B cell (primary cell): ENCODE measurements at regions of chr6 and their contacts with region 1.

Region 1: GRCh38 chr6:37207903-37208456 is 38.0 kb downstream of the PIM1 start:
- DNase-seq: peak; percentile 88
- ATAC-seq: peak; percentile 95
- H3K4me3 ChIP-seq: no peak overlapping the region
- H3K4me3 Mint-ChIP-seq: no peak overlapping the region
- H3K27ac ChIP-seq: no peak overlapping the region
- H3K27ac Mint-ChIP-seq: peak overlapping the region; percentile 3
- H3K4me1 ChIP-seq: peaks cover 4 to 12% of the 10 kb centered on the region in 2 donors
- H3K4me1 Mint-ChIP-seq: peaks cover 14% of the 10 kb centered on the region
- H3K27me3 ChIP-seq: peaks cover 0 to 4% (median 0%) of the 10 kb centered on the region in 4 experiments
- H3K27me3 Mint-ChIP-seq: no peaks in the 10 kb centered on the region
- CTCF ChIP-seq: peak; percentile 85

Region 2: DNA sequence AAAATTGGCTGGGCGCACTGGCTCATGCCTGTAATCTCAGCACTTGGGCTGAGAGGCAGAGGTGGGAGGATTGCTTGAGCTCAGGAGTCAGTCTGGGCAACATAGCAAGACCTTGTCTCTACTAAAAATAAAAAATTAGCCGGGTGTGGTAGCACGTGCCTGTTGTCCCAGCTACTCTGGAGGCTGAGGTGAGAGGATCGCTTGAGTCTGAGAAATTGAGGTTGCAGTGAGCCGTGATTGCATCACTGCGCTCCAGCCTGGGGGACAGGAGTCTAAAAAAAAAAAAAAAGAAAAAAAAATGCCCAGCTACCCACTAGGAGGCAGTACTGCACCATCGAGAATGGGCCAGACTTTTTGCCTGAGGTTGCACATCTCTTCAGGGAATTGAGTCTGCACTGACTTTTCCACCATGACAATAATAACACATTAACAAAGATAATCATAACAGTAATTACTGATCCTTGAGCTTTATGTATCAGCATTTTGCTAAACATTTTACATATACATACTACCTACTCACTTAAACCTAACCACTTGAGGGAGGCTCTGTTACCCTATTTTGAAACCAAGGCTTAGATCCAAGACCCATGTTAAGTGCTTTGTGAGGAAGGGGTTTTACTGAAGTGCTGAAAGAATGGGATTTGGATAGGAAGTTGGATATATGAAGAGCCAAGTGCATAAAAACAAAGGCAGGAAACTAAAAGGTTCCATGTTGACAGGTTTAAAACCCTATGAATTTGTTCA is 592.8 kb before region 1 on chr6:
- CTCF ChIA-PET with region 1: interaction called, 3 read pairs
- POLR2A ChIA-PET with region 1: no interaction called
- intact Hi-C with region 1: loop called (anchors 10 kb)
- DNase-seq: peak; percentile 82
- ATAC-seq: peak; percentile 81
- H3K4me3 ChIP-seq: no peak overlapping the region
- H3K4me3 Mint-ChIP-seq: no peak overlapping the region
- H3K27ac ChIP-seq: no peak overlapping the region
- H3K27ac Mint-ChIP-seq: peak overlapping the region; percentile 69
- H3K4me1 ChIP-seq: peaks cover 9 to 21% of the 10 kb centered on the region in 2 donors
- H3K4me1 Mint-ChIP-seq: peaks cover 19% of the 10 kb centered on the region
- H3K27me3 ChIP-seq: no peaks in the 10 kb centered on the region
- H3K27me3 Mint-ChIP-seq: no peaks in the 10 kb centered on the region
- CTCF ChIP-seq: peak; percentile 84

Region 3: GRCh38 chr6:36776167-36776566 is 431.8 kb before region 1 on chr6:
- CTCF ChIA-PET with region 1: no interaction called
- POLR2A ChIA-PET with region 1: no interaction called
- intact Hi-C with region 1: no loop called
- DNase-seq: no peak
- ATAC-seq: no peak
- H3K4me3 ChIP-seq: no peak overlapping the region
- H3K4me3 Mint-ChIP-seq: no peak overlapping the region
- H3K27ac ChIP-seq: no peak overlapping the region
- H3K27ac Mint-ChIP-seq: no peak overlapping the region
- H3K4me1 ChIP-seq: peaks cover 11 to 12% of the 10 kb centered on the region in 2 donors
- H3K4me1 Mint-ChIP-seq: peaks cover 13% of the 10 kb centered on the region
- H3K27me3 ChIP-seq: peaks cover 0 to 9% (median 0%) of the 10 kb centered on the region in 4 experiments
- H3K27me3 Mint-ChIP-seq: peaks cover 31% of the 10 kb centered on the region
- CTCF ChIP-seq: no peak

Region 4: GRCh38 chr6:36874443-36875249 is 333.3 kb before region 1 on chr6 and contains the start of gene PPIL1:
- CTCF ChIA-PET with region 1: interaction called, 12 read pairs
- POLR2A ChIA-PET with region 1: no interaction called
- intact Hi-C with region 1: no loop called
- DNase-seq: peak; percentile 96
- ATAC-seq: peak; percentile 93
- H3K4me3 ChIP-seq: peak within 1 kb of the TSS; percentile 73 to 100 (median 99)
- H3K4me3 Mint-ChIP-seq: peak within 1 kb of the TSS; percentile 99
- H3K27ac ChIP-seq: peak within 1 kb of the TSS; percentile 63 to 89
- H3K27ac Mint-ChIP-seq: peak within 1 kb of the TSS; percentile 97
- H3K4me1 ChIP-seq: peaks cover 12 to 15% of the 10 kb centered on the region in 2 donors
- H3K4me1 Mint-ChIP-seq: peaks cover 32% of the 10 kb centered on the region
- H3K27me3 ChIP-seq: peaks cover 0 to 3% (median under 1%) of the 10 kb centered on the region in 4 experiments
- H3K27me3 Mint-ChIP-seq: no peaks in the 10 kb centered on the region
- CTCF ChIP-seq: no peak
- total RNA-seq, gene PPIL1: 7.0 and 10.5 TPM in 2 replicates

Region 5: GRCh38 chr6:36979347-36979742 is 228.6 kb before region 1 on chr6:
- CTCF ChIA-PET with region 1: interaction called, 16 read pairs
- POLR2A ChIA-PET with region 1: no interaction called
- intact Hi-C with region 1: loop called (anchors 1 kb)
- DNase-seq: peak; percentile 42
- ATAC-seq: no peak
- H3K4me3 ChIP-seq: no peak overlapping the region
- H3K4me3 Mint-ChIP-seq: no peak overlapping the region
- H3K27ac ChIP-seq: no peak overlapping the region
- H3K27ac Mint-ChIP-seq: peak overlapping the region; percentile 47
- H3K4me1 ChIP-seq: peaks cover 16 to 17% of the 10 kb centered on the region in 2 donors
- H3K4me1 Mint-ChIP-seq: peaks cover 37% of the 10 kb centered on the region
- H3K27me3 ChIP-seq: no peaks in the 10 kb centered on the region
- H3K27me3 Mint-ChIP-seq: no peaks in the 10 kb centered on the region
- CTCF ChIP-seq: no peak

Region 6: GRCh38 chr6:37051138-37052026 is 156.6 kb before region 1 on chr6:
- CTCF ChIA-PET with region 1: interaction called, 199 read pairs
- POLR2A ChIA-PET with region 1: interaction called, 3 read pairs
- intact Hi-C with region 1: loop called (anchors 1 kb)
- DNase-seq: peak; percentile 92
- ATAC-seq: peak; percentile 44
- H3K4me3 ChIP-seq: peak overlapping the region in 1 of 5 experiments; percentile 59
- H3K4me3 Mint-ChIP-seq: peak overlapping the region; percentile 71
- H3K27ac ChIP-seq: peak overlapping the region; percentile 91 to 98
- H3K27ac Mint-ChIP-seq: peak overlapping the region; percentile 85
- H3K4me1 ChIP-seq: peaks cover 45 to 54% of the 10 kb centered on the region in 2 donors
- H3K4me1 Mint-ChIP-seq: peaks cover 52% of the 10 kb centered on the region
- H3K27me3 ChIP-seq: no peaks in the 10 kb centered on the region
- H3K27me3 Mint-ChIP-seq: no peaks in the 10 kb centered on the region
- CTCF ChIP-seq: peak; percentile 91

Region 7: GRCh38 chr6:37190159-37190535 is 17.8 kb before region 1 on chr6:
- CTCF ChIA-PET with region 1: interaction called, 10 read pairs
- POLR2A ChIA-PET with region 1: no interaction called
- intact Hi-C with region 1: no loop called
- DNase-seq: no peak
- ATAC-seq: no peak
- H3K4me3 ChIP-seq: no peak overlapping the region
- H3K4me3 Mint-ChIP-seq: no peak overlapping the region
- H3K27ac ChIP-seq: no peak overlapping the region
- H3K27ac Mint-ChIP-seq: peak overlapping the region; percentile 5
- H3K4me1 ChIP-seq: peaks cover 0 to 3% of the 10 kb centered on the region in 2 donors
- H3K4me1 Mint-ChIP-seq: peaks cover 15% of the 10 kb centered on the region
- H3K27me3 ChIP-seq: no peaks in the 10 kb centered on the region
- H3K27me3 Mint-ChIP-seq: no peaks in the 10 kb centered on the region
- CTCF ChIP-seq: no peak

Region 8: DNA sequence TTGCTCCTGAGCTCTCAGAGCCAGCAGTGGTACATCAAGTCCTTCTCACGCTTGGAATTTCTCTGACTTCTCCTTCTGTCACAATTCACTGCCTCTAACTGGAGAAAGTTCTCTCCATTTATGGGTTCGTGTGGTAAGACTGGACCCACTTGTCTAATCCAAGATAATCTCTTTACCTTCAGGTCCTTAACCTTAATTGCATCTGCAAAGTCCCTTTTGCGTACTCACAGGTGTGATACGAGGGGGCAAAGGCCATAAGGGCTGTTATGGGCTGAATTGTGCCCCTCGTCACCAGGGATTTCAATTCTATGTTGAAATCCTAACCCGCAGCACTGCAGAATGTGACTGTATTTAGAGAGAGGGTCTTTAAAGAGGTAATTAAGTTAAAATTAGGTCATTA is 22.1 kb after region 1 on chr6:
- CTCF ChIA-PET with region 1: no interaction called
- POLR2A ChIA-PET with region 1: no interaction called
- intact Hi-C with region 1: no loop called
- DNase-seq: no peak
- ATAC-seq: no peak
- H3K4me3 ChIP-seq: no peak overlapping the region
- H3K4me3 Mint-ChIP-seq: no peak overlapping the region
- H3K27ac ChIP-seq: no peak overlapping the region
- H3K27ac Mint-ChIP-seq: no peak overlapping the region
- H3K4me1 ChIP-seq: no peaks in the 10 kb centered on the region
- H3K4me1 Mint-ChIP-seq: no peaks in the 10 kb centered on the region
- H3K27me3 ChIP-seq: no peaks in the 10 kb centered on the region
- H3K27me3 Mint-ChIP-seq: no peaks in the 10 kb centered on the region
- CTCF ChIP-seq: no peak